Activated T-helper 2 cell treated with anti-CD3 and anti-CD28 coated beads, Interferon-gamma antibody, Interleukin-2, Interleukin-4, amounts not matched to agents 10 μg/mL and 5 μg/mL and 100 μg/mL, durations not matched to agents 14 hours and 24 hours and 36 hours (primary cell): ENCODE measurements at regions of chr3 and their contacts with region 1.

Region 1: GRCh38 chr3:102163036-102163827 is 271.6 kb upstream of the ZPLD1 start:
- DNase-seq: no peak
- H3K4me3 Mint-ChIP-seq: no peak overlapping the region
- H3K27ac Mint-ChIP-seq: peak overlapping the region; percentile 46
- H3K4me1 Mint-ChIP-seq: peaks cover 20% of the 10 kb centered on the region
- H3K27me3 Mint-ChIP-seq: no peaks in the 10 kb centered on the region

Region 2: DNA sequence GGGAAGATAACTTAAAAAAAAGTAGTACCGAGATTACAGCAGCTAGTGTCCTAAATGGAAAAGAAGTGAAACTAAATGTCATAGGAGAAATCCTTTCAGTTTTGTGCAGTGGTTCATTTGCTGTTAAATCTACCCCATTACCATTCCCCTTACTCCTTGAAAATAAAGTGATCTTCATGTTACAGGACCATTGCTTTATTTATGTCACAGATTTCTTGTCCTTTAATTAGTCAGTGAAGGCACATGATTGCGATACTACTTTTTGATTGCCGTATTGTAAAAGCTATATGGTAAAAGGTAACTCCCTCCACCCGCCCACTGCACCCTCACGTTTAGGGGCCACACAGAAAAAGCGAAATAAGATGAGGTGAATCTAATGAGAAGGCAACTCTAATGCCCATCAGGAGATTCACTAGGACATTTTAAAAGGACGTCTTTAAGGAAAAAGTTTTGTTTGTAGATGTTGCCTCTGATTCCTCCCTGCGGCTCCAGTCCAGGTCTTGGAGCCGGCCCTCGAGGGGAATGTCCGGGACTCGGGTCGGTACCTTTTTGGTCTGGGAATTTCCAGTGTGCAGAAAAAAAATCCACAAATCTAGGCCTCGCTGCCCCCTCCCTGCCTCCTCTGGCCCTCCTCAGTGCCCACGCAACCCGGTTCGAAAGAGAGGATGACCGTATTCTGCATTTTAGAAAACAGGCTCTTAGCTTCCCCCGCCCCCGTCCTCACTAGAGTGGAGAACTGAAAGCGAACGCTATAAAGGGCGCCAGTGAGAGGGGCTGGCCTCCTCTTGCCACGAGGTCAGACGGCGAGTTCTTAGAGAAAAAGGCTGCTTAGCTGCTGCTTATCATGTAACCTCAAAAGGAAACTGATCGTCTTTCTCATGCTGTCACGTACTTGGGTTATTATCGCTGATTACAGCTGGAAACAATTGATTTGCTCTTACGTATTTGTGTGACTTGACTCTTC is 335.7 kb before region 1 on chr3:
- intact Hi-C with region 1: loop called (anchors 2 kb)
- DNase-seq: peak; percentile 77
- H3K4me3 Mint-ChIP-seq: peak overlapping the region; percentile 93
- H3K27ac Mint-ChIP-seq: peak overlapping the region; percentile 98
- H3K4me1 Mint-ChIP-seq: peaks cover 55% of the 10 kb centered on the region
- H3K27me3 Mint-ChIP-seq: no peaks in the 10 kb centered on the region

Region 3: DNA sequence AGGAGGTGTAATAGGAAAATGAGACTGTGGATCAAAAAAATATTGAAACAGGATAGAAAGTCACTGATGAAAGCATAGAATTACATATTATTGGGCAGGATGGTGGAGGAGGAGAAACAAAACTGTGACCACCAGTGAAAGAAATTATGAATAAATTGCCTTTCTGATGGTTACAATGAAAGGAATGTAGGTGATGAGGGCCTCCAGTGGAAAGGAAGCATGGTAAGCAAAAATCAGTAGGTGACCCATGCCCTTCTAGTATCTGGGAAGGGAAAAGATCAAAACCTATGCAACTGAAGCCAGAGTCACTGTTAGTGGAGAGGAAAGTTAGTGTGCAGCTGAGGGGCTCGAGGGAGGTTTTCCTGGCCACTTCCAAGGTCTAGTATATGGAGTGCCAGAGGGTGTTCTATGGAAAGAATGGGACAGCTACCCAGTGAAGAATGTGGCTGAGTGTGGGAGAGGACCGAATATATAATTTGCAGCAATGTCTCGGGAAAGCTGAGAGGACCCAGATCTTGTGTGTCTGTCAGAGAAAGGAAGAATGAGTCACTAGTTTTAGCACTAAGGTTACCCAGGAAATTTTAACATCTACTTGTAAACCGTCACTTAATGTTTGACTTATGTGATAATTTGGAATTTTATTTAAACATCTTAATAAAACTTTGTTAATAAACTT is 167.7 kb before region 1 on chr3:
- intact Hi-C with region 1: loop called (anchors 2 kb)
- DNase-seq: no peak
- H3K4me3 Mint-ChIP-seq: peak overlapping the region; percentile 24
- H3K27ac Mint-ChIP-seq: peak overlapping the region; percentile 83
- H3K4me1 Mint-ChIP-seq: peaks cover 63% of the 10 kb centered on the region
- H3K27me3 Mint-ChIP-seq: peaks cover 2% of the 10 kb centered on the region

Region 4: DNA sequence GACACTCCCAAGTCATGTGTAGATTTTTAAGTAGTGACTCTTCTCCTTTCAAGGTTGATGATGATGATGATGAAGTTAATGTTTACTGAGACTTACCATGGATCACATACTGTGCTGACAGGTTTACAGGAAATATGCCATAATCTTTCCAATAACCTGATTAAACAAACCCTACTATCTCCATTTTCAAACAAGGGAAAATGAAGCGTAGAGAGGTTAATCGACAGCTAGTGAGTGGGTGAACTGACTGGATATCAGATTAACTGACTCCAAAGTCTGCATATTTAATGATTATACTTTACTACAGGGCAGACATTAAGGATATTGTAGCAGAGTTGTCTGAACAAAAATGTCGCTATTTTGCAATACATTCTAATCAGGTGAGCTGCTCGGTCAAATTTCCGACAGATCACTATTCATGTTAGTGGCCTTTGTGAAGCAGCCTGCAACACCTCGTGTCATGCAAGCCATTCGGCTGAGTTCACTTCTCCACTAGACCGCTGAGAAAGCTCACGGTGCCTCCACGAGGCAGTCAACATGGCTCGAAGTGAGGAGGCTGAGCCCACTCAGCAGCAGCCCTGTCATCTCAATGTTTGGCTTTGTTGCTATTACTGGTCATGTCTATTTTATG is 49.7 kb before region 1 on chr3:
- intact Hi-C with region 1: loop called (anchors 5 kb)
- DNase-seq: no peak
- H3K4me3 Mint-ChIP-seq: no peak overlapping the region
- H3K27ac Mint-ChIP-seq: peak overlapping the region; percentile 79
- H3K4me1 Mint-ChIP-seq: peaks cover 36% of the 10 kb centered on the region
- H3K27me3 Mint-ChIP-seq: no peaks in the 10 kb centered on the region

Region 5: GRCh38 chr3:102132370-102132769 is 30.9 kb before region 1 on chr3:
- intact Hi-C with region 1: loop called (anchors 2 kb)
- DNase-seq: no peak
- H3K4me3 Mint-ChIP-seq: no peak overlapping the region
- H3K27ac Mint-ChIP-seq: no peak overlapping the region
- H3K4me1 Mint-ChIP-seq: peaks cover 39% of the 10 kb centered on the region
- H3K27me3 Mint-ChIP-seq: peaks cover 2% of the 10 kb centered on the region

Region 6: GRCh38 chr3:102229062-102229655 is 65.9 kb after region 1 on chr3:
- intact Hi-C with region 1: loop called (anchors 2 kb)
- DNase-seq: peak; percentile 62
- H3K4me3 Mint-ChIP-seq: no peak overlapping the region
- H3K27ac Mint-ChIP-seq: no peak overlapping the region
- H3K4me1 Mint-ChIP-seq: peaks cover 23% of the 10 kb centered on the region
- H3K27me3 Mint-ChIP-seq: peaks cover 23% of the 10 kb centered on the region